MCF 10A (cell line): ENCODE measurements at regions of chr2 and their contacts with region 1.

Region 1: DNA sequence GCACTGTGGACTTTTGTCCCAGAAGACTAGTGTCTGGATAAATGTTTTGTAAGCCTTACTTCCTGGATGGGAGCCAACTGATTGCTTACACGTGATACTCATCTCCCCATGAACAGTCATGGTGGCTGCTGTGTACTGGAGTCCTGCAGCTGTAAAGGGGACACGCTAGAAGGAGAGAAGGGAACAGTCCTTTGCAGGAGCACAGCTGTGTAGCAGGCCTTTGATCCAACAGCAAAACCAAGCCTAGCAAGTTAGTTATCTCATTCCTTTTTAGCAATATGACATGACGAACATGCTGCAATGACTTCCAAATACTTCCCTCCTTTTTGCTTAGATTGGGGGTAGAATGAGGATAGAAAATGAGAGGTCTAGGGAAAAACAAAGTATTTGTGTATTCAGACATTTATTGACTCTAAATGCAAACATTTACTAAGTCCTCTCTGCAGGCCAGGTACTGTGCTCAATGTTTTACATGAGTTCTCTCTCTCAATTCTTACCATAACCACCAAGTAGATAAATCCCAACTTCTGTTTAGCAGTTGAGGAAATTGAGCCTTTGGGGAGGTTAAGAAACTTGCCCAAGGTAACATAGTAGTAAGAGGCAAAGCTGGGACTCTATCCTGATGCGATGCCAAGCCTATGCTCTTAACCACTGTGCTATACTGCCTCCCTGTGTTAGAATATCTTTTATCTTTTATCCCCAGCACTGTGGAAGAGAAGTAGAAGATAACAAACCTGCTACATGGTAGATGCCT is 55.4 kb upstream of the CD28 start:
- DNase-seq: peak; percentile 77
- H3K4me3 Mint-ChIP-seq: no peak overlapping the region
- H3K27ac Mint-ChIP-seq: peak overlapping the region; percentile 68
- H3K4me1 Mint-ChIP-seq: peaks cover 42% of the 10 kb centered on the region
- H3K27me3 Mint-ChIP-seq: no peaks in the 10 kb centered on the region
- CTCF ChIP-seq: peak; percentile 46

Region 2: DNA sequence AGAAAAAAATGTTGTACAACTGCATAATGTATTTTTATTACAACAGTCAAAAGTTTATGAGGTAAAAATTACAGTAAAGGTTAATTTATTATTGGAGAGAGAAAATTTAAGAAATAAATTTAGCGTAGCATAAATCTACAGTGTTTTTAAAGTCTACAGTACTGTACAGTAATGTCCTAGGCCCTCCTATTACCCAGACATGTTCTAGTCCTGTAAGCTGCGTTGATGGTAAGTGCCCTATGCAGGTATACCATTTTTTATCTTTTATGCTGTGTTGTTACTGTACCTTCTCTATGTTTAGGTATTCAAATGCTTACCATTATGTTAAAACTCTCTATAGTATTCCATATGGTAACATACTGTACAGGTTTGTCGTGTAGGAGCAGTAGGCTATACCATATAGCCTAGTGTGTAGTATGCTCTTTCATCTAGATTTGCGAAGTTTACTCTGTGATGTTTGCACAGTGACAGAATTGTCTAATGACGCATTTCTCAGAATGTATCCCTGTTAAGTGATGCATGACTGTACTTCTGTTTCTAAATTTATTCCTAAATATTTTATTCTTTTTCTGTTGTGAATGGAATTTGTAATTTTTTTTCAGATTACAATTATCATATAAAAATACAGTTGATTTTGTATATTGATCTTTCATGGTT is 298.3 kb before region 1 on chr2:
- CTCF ChIA-PET with region 1: no interaction called
- POLR2A ChIA-PET with region 1: no interaction called
- intact Hi-C with region 1: no loop called
- DNase-seq: no peak
- H3K4me3 Mint-ChIP-seq: no peak overlapping the region
- H3K27ac Mint-ChIP-seq: peak overlapping the region; percentile 59
- H3K4me1 Mint-ChIP-seq: no peaks in the 10 kb centered on the region
- H3K27me3 Mint-ChIP-seq: no peaks in the 10 kb centered on the region
- CTCF ChIP-seq: no peak

Region 3: DNA sequence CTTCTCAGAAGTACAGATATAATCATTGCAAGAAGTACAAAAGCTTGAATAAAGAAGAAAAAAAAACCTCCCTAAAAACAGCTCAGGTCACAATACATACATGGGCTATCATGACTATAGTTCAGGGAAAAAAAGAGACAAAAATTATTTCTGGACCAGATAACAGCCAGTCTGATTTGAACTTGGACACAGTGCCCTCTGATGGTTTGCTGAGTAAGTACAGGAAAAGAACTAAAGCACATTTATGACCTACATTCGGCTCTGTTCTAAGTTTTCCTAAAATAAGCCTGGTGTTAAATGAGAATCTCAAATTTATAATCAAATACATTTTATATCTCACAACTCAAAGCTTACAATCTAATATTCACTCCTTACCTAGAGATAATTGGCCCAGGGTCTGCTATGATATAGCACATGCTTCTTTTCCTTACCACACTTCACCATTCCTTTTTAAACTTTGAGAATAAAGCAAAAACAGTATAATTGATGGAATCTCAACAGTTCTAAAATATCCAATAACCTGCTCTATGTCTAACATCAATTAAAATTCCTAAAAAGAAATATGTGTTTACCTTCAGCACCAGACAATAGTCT is 197.1 kb before region 1 on chr2:
- CTCF ChIA-PET with region 1: no interaction called
- POLR2A ChIA-PET with region 1: no interaction called
- intact Hi-C with region 1: loop called (anchors 5 kb)
- DNase-seq: peak; percentile 60
- H3K4me3 Mint-ChIP-seq: no peak overlapping the region
- H3K27ac Mint-ChIP-seq: no peak overlapping the region
- H3K4me1 Mint-ChIP-seq: peaks cover 14% of the 10 kb centered on the region
- H3K27me3 Mint-ChIP-seq: no peaks in the 10 kb centered on the region
- CTCF ChIP-seq: peak; percentile 62

Region 4: DNA sequence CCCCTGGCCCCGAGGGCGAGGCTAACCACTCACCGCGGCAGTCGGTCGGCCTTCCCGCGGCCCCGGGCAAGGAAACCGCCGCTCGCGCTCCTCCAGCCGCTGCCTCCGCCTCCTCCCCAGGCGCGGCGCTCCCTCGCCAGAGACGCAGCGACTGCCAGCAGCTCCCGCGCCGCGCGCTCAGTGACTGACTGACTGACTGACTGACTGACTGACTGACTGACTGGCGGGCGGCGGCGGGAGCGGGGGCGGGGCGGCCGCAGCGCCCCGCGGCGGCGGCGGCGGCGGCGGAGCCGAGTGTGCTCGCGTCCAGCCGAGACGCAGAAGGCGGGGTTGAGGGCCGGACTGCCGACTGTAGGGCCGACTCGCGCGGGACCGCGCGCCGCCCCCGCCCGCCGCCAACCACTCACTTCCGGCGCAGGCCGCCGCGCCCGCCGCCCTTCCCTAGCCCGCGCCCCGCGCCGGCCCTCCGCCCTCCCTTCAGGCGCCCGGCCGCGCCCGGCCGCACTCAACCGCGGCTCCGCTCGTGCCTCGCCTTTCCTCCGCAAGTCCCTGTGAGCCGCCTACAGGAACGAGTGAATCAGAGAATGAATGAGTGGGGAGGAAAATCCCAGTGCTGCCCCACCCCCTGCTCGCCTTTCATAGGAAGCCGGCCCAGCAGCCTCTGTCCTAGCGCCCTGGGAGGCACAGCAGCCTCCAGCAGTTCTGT is 115.8 kb before region 1 on chr2 and contains the start of gene RAPH1:
- CTCF ChIA-PET with region 1: interaction called, 5 read pairs
- POLR2A ChIA-PET with region 1: interaction called, 44 read pairs
- intact Hi-C with region 1: loop called (anchors 1 kb)
- DNase-seq: peak; percentile 84
- H3K4me3 Mint-ChIP-seq: peak within 1 kb of the TSS; percentile 77
- H3K27ac Mint-ChIP-seq: peak within 1 kb of the TSS; percentile 93
- H3K4me1 Mint-ChIP-seq: peaks cover 17% of the 10 kb centered on the region
- H3K27me3 Mint-ChIP-seq: no peaks in the 10 kb centered on the region
- CTCF ChIP-seq: no peak
- total RNA-seq, gene RAPH1: 78.0 and 79.8 TPM in 2 replicates

Region 5: GRCh38 chr2:203683932-203684556 is 33.0 kb after region 1 on chr2:
- CTCF ChIA-PET with region 1: interaction called, 4 read pairs
- POLR2A ChIA-PET with region 1: interaction called, 12 read pairs
- intact Hi-C with region 1: no loop called
- DNase-seq: peak; percentile 96
- H3K4me3 Mint-ChIP-seq: peak overlapping the region; percentile 30
- H3K27ac Mint-ChIP-seq: peak overlapping the region; percentile 92
- H3K4me1 Mint-ChIP-seq: peaks cover 66% of the 10 kb centered on the region
- H3K27me3 Mint-ChIP-seq: no peaks in the 10 kb centered on the region
- CTCF ChIP-seq: no peak

Region 6: DNA sequence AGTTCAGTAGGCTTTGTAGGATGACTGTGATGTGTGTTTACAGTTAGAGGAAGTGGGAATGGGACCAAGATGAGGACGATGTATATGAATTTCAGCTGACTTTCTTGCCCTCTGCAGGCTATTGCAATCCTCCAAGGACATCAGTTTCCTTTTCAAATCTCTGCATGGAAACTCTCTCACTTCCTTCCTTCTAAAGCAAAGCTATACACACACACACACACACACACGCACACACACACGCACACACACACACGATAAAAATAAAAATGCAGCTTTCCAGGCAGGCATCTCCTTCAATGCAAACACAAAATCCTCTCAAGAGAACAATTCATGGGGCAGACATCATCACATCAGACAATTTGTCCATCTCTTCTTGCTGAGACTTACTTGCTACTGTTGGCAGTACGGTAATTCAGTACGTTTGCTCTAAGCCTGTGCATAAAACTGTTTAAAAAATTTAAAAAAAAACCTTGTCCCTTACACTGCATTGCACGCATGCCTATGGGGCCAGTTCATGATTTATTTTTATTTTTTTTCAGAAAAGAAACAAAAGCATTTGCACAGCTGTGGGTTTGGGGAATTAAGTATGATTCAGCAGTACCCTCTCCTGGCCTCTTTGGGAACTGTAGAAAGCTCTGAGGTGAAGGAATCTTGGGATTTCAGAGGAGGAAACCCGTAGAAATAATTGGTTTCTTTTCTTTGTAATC is 258.4 kb after region 1 on chr2:
- CTCF ChIA-PET with region 1: no interaction called
- POLR2A ChIA-PET with region 1: no interaction called
- intact Hi-C with region 1: loop called (anchors 5 kb)
- DNase-seq: peak; percentile 59
- H3K4me3 Mint-ChIP-seq: no peak overlapping the region
- H3K27ac Mint-ChIP-seq: no peak overlapping the region
- H3K4me1 Mint-ChIP-seq: no peaks in the 10 kb centered on the region
- H3K27me3 Mint-ChIP-seq: peaks cover 12% of the 10 kb centered on the region
- CTCF ChIP-seq: peak; percentile 70